ENCODE measurements at regions of chr12 and their contacts with region 1.

Region 1: GRCh38 chr12:49347384-49348237 is 923 bp downstream of the DNAJC22 start:
- DNase-seq: peak; percentile 95 to 98
- ATAC-seq: peak; percentile 84 to 90
- H3K4me3 ChIP-seq: peak overlapping the region; percentile 50
- H3K27ac ChIP-seq: peak overlapping the region; percentile 80 to 86
- H3K4me1 ChIP-seq: peaks cover 48% of the 10 kb centered on the region
- CTCF ChIP-seq: peak; percentile 98
- EP300 ChIP-seq: no peak
- POLR2A ChIP-seq: peak; percentile 84
- RAD21 ChIP-seq: peak; percentile 32 to 55; a peak in 4 of 5 replicates

Region 2: GRCh38 chr12:49188914-49189367 is 158.7 kb before region 1 on chr12 and contains the start of gene TUBA1A:
- CTCF ChIA-PET with region 1: no interaction called
- POLR2A ChIA-PET with region 1: no interaction called
- DNase-seq: peak; percentile 95 to 99
- ATAC-seq: peak; percentile 95
- H3K4me3 ChIP-seq: peak within 1 kb of the TSS; percentile 89
- H3K27ac ChIP-seq: peak within 1 kb of the TSS; percentile 90 to 92
- H3K4me1 ChIP-seq: peaks cover 19% of the 10 kb centered on the region
- CTCF ChIP-seq: no peak
- EP300 ChIP-seq: no peak
- POLR2A ChIP-seq: peak; percentile 99
- RAD21 ChIP-seq: peak in 1 of 2 experiments; percentile 47; a peak in 3 of 5 replicates
- polyA plus RNA-seq, gene TUBA1A: 163 and 231 TPM in 2 replicates

Region 3: GRCh38 chr12:49288412-49288853 is 59.2 kb before region 1 on chr12:
- CTCF ChIA-PET with region 1: interaction called, 164 read pairs
- POLR2A ChIA-PET with region 1: no interaction called
- DNase-seq: peak; percentile 66 to 70
- ATAC-seq: peak; percentile 47 to 66; a peak in 4 of 6 replicates
- H3K4me3 ChIP-seq: no peak overlapping the region
- H3K27ac ChIP-seq: no peak overlapping the region
- H3K4me1 ChIP-seq: 0 out of 3 replicates have a peak, but pooled peaks cover 12% of the 10 kb centered on the region
- CTCF ChIP-seq: peak; percentile 96
- EP300 ChIP-seq: no peak
- POLR2A ChIP-seq: no peak
- RAD21 ChIP-seq: peak; percentile 89 to 91

Region 4: GRCh38 chr12:49331380-49332222 is 16.0 kb before region 1 on chr12:
- CTCF ChIA-PET with region 1: interaction called, 144 read pairs
- POLR2A ChIA-PET with region 1: interaction called, 4 read pairs
- DNase-seq: peak; percentile 83 to 90
- ATAC-seq: peak; percentile 88 to 93
- H3K4me3 ChIP-seq: no peak overlapping the region
- H3K27ac ChIP-seq: peak overlapping the region in 1 of 2 experiments; percentile 28; a peak in 1 of 6 replicates
- H3K4me1 ChIP-seq: peaks cover 6% of the 10 kb centered on the region; the same call in 2 of the 3 replicates
- CTCF ChIP-seq: peak; percentile 82
- EP300 ChIP-seq: no peak
- POLR2A ChIP-seq: no peak
- RAD21 ChIP-seq: peak; percentile 85 to 86

Region 5: GRCh38 chr12:49482095-49483051 is 134.8 kb after region 1 on chr12:
- CTCF ChIA-PET with region 1: interaction called, 11 read pairs
- POLR2A ChIA-PET with region 1: no interaction called
- DNase-seq: no peak
- ATAC-seq: peak; percentile 35 to 48; a peak in 3 of 6 replicates
- H3K4me3 ChIP-seq: no peak overlapping the region
- H3K27ac ChIP-seq: peak overlapping the region; percentile 6 to 48; a peak in 4 of 6 replicates
- H3K4me1 ChIP-seq: peaks cover 28% of the 10 kb centered on the region
- CTCF ChIP-seq: no peak
- EP300 ChIP-seq: no peak
- POLR2A ChIP-seq: no peak
- RAD21 ChIP-seq: no peak

Region 6: DNA sequence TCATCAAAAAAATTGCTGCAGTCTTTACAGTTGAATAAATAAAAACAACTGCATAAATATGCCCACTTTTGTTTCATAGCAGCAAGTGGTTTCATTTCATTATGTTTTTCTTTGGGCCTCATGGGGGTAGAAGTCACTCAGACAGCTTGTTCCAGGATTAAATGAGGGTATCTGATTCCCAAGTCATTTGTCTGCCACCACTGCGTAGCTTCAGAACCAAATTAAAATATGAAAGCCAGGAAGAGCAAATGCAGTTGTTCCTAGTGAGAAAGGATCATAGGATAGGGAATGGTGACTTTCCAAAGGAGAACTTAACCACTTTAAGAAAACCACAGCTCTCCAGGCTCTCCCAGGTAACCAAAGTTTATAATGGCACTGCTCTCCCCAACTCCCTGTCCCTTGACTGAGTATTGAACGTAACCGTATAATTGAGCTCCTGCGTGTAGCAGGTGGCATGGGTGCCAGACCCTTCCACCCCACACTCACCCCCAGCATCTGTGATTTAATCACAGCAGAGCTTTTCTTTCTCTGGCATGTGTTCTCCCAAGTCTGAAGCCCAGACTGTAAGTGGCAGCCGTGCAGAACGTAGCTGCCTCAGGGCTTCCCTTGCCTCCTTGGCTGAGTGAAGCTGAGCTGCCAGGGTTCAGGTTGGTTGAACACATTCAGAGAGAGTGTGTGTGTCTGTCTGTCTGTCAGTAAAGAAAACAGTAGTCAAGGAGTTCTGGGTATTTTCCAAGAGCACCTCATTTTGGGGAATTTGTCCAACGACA is 179.9 kb after region 1 on chr12:
- CTCF ChIA-PET with region 1: interaction called, 41 read pairs
- POLR2A ChIA-PET with region 1: no interaction called
- DNase-seq: no peak
- ATAC-seq: no peak
- H3K4me3 ChIP-seq: no peak overlapping the region
- H3K27ac ChIP-seq: no peak overlapping the region
- H3K4me1 ChIP-seq: no peaks in the 10 kb centered on the region
- CTCF ChIP-seq: no peak
- EP300 ChIP-seq: no peak
- POLR2A ChIP-seq: peak; percentile 21; the same call in 1 of the 2 replicates
- RAD21 ChIP-seq: no peak

Region 7: DNA sequence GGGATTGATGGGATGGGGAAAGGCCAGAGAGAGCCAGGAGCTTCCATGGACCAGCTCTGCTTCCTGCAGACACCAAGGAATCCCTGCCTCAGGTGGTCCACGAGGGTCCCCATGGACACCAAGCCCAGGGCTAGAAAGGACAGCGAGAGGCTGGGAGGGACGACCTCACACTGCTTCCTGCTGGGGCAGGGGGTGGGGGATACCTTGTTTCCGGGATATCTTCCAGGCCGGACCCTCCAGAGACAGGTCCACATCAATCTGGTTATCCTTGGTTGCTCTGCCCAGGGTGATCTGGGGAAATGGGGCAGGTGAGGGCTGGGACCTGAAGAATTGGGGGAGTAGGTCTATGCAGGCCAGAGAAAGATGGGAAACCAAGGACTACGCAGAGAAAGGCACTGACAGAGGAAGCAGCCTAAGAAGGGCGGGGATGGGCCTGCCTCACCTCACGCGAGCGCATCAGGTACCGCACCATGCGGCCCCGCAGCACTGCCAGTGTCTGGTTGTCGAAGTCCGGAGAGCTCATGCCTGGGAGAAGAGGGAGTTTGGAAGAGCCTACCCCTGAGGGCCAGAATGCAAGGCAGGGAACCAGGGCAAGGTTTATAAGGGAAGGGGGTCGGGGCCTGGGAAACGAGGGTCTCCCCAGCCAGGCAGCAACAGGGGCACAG is 211.5 kb after region 1 on chr12:
- CTCF ChIA-PET with region 1: interaction called, 30 read pairs
- POLR2A ChIA-PET with region 1: interaction called, 3 read pairs
- DNase-seq: no peak
- ATAC-seq: no peak
- H3K4me3 ChIP-seq: no peak overlapping the region
- H3K27ac ChIP-seq: no peak overlapping the region
- H3K4me1 ChIP-seq: no peaks in the 10 kb centered on the region
- CTCF ChIP-seq: no peak
- EP300 ChIP-seq: no peak
- POLR2A ChIP-seq: no peak
- RAD21 ChIP-seq: no peak

Region 8: DNA sequence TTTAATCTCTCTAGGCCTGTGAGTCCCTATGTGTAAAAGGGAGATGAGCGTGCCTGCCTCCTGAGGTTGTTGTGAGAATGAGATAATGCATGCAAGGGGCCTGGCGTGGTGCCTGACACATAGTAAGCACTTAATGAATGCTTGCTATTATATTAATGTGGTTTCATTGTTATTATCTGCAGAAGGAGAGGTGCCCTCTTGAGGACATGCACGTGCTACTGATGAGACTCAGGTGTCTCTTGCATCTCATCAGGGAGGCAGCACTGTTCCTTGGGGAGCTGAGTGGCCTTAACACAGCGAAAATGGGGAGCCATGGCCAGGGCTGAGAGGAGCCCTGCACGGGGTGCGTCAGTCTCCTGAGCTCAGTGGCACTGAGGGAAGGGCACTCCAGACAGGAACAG is 525.2 kb after region 1 on chr12:
- CTCF ChIA-PET with region 1: no interaction called
- POLR2A ChIA-PET with region 1: no interaction called
- DNase-seq: no peak
- ATAC-seq: no peak
- H3K4me3 ChIP-seq: no peak overlapping the region
- H3K27ac ChIP-seq: no peak overlapping the region
- H3K4me1 ChIP-seq: no peaks in the 10 kb centered on the region
- CTCF ChIP-seq: no peak
- EP300 ChIP-seq: no peak
- POLR2A ChIP-seq: no peak
- RAD21 ChIP-seq: no peak

Measured in A549 (cell line).